ENCODE measurements at regions of chr14 and their contacts with region 1.

Region 1: GRCh38 chr14:68911594-68912227 is 67.4 kb downstream of the ACTN1 start:
- DNase-seq: peak; percentile 67
- H3K4me3 Mint-ChIP-seq: no peak overlapping the region
- H3K27ac Mint-ChIP-seq: peak overlapping the region; percentile 67
- H3K4me1 Mint-ChIP-seq: peaks cover 20% of the 10 kb centered on the region
- H3K27me3 Mint-ChIP-seq: no peaks in the 10 kb centered on the region

Region 2: DNA sequence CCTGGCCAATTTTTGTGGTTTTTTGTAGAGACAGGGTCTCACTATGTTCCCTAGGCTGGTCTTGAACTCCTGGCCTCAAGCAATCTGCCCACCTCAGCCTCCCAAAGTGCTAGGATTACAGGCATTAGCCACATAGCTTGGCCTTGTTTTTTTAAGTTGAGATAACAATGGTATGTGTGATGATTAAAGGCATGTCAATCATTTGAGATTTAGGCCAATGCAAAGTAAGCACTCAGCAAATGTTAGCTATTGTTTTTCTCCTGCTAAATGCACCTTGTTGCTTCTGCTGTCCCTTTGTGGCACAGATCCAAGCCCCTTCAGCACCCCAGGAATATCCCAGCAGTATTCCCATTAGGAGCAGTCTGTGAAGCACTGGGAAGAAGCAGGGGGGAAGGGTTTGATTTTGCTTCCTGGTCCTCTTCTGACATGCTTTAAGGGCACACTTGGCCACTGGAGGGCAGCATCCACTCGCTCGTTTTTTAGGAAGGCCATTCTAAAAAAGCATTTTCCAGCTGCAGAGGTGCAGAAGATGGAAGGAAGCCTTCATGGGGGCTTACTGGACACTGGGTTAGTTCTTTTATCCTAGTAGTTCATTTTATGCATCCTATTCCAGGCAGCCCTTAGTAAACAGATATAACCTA is 48.6 kb before region 1 on chr14:
- intact Hi-C with region 1: loop called (anchors 2 kb)
- DNase-seq: peak; percentile 44
- H3K4me3 Mint-ChIP-seq: no peak overlapping the region
- H3K27ac Mint-ChIP-seq: no peak overlapping the region
- H3K4me1 Mint-ChIP-seq: no peaks in the 10 kb centered on the region
- H3K27me3 Mint-ChIP-seq: peaks cover 3% of the 10 kb centered on the region

Region 3: DNA sequence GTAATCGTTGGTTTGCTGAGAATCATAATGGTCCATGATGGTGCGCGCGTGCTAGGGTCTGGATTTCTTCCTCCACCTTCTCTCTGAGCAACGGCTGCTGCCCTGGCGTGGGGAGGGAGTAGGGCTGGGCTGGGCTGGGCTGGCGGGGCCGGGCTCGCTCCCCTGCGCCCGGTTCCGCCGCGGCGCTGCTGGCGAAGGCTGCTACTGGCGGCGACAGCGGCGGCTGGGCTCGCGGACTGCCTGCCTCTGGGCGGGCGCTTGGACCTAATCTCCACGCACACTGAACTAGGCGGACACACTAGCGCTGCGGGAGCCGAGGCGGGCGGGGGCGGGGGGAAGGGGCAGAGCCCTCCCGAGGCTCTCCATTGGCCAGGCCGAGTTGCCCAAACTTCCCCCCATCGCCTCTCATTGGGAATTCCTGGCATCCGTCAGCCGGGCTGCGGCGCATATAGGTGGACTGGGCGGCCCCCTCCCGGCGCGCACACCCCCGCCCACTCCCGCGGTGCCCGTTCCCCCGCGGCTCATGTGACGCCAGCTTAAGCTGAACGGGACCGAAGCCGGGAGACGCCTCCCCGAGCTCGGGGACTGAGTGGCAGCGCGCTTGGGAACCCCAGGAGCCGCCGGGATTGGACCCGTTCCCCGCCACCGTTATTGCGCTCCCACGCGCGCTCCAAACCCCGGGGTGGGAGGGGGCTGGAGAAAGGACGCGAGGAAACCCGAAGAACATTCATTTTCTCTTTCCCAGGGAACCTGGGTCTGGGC is 67.5 kb after region 1 on chr14 and contains the start of gene ACTN1:
- intact Hi-C with region 1: loop called (anchors 2 kb)
- DNase-seq: peak; percentile 22
- H3K4me3 Mint-ChIP-seq: peak within 1 kb of the TSS; percentile 85
- H3K27ac Mint-ChIP-seq: peak within 1 kb of the TSS; percentile 68
- H3K4me1 Mint-ChIP-seq: peaks cover 22% of the 10 kb centered on the region
- H3K27me3 Mint-ChIP-seq: peaks cover 32% of the 10 kb centered on the region
- total RNA-seq, gene ACTN1: 27.4 and 27.9 TPM in 2 replicates

Region 4: GRCh38 chr14:69101331-69101826 is 189.7 kb after region 1 on chr14:
- intact Hi-C with region 1: loop called (anchors 1 kb)
- DNase-seq: no peak
- H3K4me3 Mint-ChIP-seq: no peak overlapping the region
- H3K27ac Mint-ChIP-seq: no peak overlapping the region
- H3K4me1 Mint-ChIP-seq: peaks cover 10% of the 10 kb centered on the region
- H3K27me3 Mint-ChIP-seq: no peaks in the 10 kb centered on the region

Region 5: DNA sequence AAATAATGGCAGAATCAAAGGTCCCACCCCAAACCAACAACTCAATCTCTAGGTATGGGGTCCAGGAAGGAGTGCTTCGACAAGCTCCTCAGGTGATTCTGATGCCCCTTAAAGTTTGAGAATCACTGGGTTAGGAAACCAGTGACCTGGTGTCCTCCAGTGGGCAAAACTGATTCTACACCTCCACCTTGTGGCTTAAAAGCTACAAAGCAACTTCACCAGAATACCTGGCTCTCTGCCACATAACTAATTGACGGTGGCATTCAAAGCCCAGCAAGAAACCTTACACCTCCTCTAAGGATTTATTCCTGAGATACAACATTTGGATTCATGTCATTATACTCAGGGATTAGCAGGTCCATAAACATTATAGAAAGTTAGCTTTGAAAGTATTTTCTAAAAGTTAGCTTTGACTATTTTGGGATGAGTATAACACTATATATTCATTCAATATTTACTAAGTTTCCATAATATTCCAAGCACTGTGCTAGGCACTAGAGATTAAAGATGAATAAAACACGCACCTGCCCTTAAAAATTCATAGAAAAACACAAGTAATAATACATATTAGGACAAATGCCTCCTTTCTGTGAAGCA is 195.8 kb after region 1 on chr14:
- intact Hi-C with region 1: loop called (anchors 1 kb)
- DNase-seq: no peak
- H3K4me3 Mint-ChIP-seq: no peak overlapping the region
- H3K27ac Mint-ChIP-seq: no peak overlapping the region
- H3K4me1 Mint-ChIP-seq: no peaks in the 10 kb centered on the region
- H3K27me3 Mint-ChIP-seq: no peaks in the 10 kb centered on the region